Activated CD4-positive, alpha-beta memory T cell treated with anti-CD3 and anti-CD28 coated beads, Interleukin-2, amount 10 ng/mL, durations not matched to agents 7 days and 5 days (primary cell): ENCODE measurements at regions of chr4 and their contacts with region 1.

Region 1: DNA sequence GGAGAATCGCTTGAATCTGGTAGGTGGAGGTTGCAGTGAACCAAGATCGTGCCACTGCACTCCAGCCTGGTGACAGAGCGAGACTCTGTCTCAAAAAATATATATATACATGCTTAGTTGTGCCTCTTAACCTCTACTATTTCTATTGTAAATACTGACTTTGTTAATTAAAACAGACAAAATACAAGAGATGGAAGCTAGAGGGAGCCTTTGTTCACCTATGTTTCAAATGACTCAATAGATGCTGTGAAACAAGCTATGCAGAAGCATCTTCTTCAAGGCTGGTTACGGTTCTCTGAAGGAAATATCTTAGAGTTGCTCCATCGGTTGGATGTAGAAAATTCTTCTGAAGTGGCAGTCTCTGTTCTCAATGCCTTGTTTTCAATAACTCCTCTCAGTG is 6.2 kb downstream of the NCAPG start:
- DNase-seq: no peak
- H3K4me3 Mint-ChIP-seq: no peak overlapping the region
- H3K27ac Mint-ChIP-seq: peak overlapping the region; percentile 74
- H3K4me1 Mint-ChIP-seq: peaks cover 55% of the 10 kb centered on the region
- H3K27me3 Mint-ChIP-seq: no peaks in the 10 kb centered on the region

Region 2: DNA sequence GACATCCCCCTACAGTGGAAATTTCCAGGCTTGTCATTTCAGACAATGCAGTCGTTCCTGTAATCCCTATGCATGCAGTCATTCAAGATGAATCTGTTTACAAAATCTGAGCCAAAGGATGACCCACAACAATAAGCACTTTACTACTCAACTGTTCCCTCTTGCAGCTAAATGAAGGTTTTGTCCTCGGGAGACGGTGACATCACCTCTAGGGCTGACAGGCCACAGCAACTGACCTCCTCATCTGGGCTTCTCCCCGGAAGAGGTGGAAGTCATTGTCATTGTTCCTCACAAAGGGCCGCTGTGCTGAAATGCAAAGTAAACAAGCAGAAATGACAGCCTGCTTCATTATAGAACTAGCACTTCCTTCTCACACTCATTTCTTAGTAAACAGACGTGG is 272.8 kb before region 1 on chr4:
- CTCF ChIA-PET with region 1: interaction called, 18 read pairs
- POLR2A ChIA-PET with region 1: interaction called, 14 read pairs
- DNase-seq: no peak
- H3K4me3 Mint-ChIP-seq: no peak overlapping the region
- H3K27ac Mint-ChIP-seq: no peak overlapping the region
- H3K4me1 Mint-ChIP-seq: peaks cover 4% of the 10 kb centered on the region
- H3K27me3 Mint-ChIP-seq: peaks cover 26% of the 10 kb centered on the region

Region 3: GRCh38 chr4:17576932-17577665 is 239.9 kb before region 1 on chr4 and contains the start of gene LAP3:
- CTCF ChIA-PET with region 1: no interaction called
- POLR2A ChIA-PET with region 1: interaction called, 76 read pairs
- DNase-seq: peak; percentile 99
- H3K4me3 Mint-ChIP-seq: peak within 1 kb of the TSS; percentile 97
- H3K27ac Mint-ChIP-seq: peak within 1 kb of the TSS; percentile 99
- H3K4me1 Mint-ChIP-seq: peaks cover 43% of the 10 kb centered on the region
- H3K27me3 Mint-ChIP-seq: no peaks in the 10 kb centered on the region
- total RNA-seq, gene LAP3: 180 to 182 TPM

Region 4: GRCh38 chr4:17846266-17846665 is 29.2 kb after region 1 on chr4:
- CTCF ChIA-PET with region 1: interaction called, 14 read pairs
- POLR2A ChIA-PET with region 1: no interaction called
- DNase-seq: no peak
- H3K4me3 Mint-ChIP-seq: no peak overlapping the region
- H3K27ac Mint-ChIP-seq: no peak overlapping the region
- H3K4me1 Mint-ChIP-seq: no peaks in the 10 kb centered on the region
- H3K27me3 Mint-ChIP-seq: no peaks in the 10 kb centered on the region

Region 5: GRCh38 chr4:17859793-17860406 is 42.9 kb after region 1 on chr4:
- CTCF ChIA-PET with region 1: no interaction called
- POLR2A ChIA-PET with region 1: no interaction called
- DNase-seq: no peak
- H3K4me3 Mint-ChIP-seq: no peak overlapping the region
- H3K27ac Mint-ChIP-seq: no peak overlapping the region
- H3K4me1 Mint-ChIP-seq: no peaks in the 10 kb centered on the region
- H3K27me3 Mint-ChIP-seq: no peaks in the 10 kb centered on the region